Left ventricle myocardium superior (tissue), 1 donor: ENCODE measurements at regions of chr11 and their contacts with region 1.

Region 1: DNA sequence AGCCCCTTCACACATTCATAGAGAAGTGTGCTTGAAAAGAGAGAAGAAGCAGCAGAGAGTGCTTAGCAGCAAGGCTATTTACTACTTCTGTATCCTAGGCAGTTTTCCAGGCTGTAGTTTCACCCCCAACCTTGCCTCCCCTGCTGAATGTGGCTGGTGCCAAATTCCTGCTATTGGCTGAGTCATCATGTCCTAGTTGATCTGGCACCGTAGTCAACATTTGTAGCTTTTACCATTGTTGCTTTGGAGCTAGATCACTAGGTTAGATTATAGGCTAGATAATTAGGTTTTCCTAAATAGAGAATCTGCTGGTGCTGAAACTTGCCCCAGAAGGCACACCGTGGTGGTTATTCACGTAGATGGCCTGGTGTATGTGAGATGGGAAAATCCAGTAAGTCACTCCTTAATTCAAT is 32.7 kb downstream of the ARHGAP42 start:
- DNase-seq: no peak
- ATAC-seq: peak; percentile 95

Region 2: DNA sequence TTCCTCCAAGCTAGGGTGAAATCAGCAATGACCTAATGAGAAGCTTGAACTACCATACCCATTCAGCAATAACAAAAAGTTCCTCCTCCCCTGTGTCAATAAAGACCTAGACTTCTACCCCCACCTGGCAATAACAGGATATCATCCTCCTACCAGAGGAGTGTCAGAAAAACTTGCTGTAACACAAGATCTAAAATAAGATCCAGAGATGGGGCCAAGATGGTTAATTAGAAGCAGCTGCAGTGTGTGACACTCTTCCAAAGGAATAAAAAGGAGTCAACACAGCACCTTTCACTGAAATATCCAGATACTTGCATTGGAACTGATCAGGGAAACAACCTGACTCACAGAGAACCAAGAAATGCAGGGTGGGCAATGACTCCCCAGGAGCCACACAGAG is 117.1 kb before region 1 on chr11:
- intact Hi-C with region 1: no loop called
- DNase-seq: no peak
- ATAC-seq: no peak

Region 3: DNA sequence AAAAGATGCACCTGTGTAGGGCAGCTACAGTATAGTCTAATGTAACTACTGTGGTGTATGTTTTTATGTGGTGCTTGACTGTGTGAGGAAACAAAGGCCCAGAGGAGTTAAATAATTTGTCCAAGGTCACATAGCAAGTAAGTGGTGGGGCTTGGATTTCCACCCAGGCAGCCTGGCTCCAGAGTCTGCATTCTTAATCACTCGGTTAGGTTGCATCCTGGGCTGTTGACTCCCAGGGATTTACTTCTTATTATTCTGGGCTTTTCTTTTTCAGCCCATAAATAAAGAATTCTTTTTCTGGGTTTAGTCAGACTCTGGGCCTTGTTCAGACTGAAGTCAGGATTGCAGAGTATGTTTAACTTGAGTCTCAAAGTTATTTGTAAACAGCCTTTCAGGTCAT is 49.4 kb after region 1 on chr11:
- intact Hi-C with region 1: no loop called
- DNase-seq: no peak
- ATAC-seq: no peak

Region 4: DNA sequence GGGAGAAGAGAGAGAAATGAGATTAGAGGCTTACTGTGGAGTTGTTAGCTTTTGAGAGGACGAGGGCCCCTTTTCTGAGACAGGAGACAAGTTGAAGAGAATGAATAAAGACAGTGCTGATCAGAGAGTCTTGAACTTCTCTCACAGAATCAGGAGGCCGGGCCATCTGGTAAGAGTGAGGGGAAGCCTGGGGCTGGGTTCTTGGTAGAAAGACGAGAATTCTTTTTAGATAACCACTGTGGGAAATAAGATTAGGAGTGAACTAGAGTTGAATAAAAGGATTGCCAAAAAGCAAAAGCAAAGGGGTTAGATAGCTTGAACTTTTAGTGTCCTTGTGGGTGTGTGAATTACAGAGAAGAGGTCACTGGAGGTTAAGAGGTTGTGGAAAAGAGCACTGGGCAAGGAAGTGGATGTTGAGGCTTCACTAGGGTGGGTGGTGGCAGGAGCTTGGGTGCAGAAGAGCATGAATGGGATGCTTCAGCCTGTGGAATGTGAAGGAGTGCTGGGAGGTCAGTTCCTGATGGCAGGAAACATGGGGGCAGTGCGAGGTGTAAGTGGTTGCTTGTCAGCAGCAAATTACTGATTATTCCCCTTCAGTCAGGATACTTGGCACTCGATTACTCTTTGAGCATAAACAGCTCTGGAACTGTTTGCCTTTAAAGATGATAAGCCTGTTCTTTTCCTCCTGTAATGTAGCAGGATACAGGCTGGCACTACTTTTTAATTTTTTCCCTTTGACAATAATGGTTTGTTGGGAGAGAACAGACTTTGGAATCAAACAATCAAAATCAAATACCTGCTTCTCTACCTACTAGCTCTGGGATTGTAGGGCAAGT is 65.6 kb after region 1 on chr11:
- intact Hi-C with region 1: loop called (anchors 2 kb)
- DNase-seq: peak; percentile 44
- ATAC-seq: peak; percentile 94

Region 5: DNA sequence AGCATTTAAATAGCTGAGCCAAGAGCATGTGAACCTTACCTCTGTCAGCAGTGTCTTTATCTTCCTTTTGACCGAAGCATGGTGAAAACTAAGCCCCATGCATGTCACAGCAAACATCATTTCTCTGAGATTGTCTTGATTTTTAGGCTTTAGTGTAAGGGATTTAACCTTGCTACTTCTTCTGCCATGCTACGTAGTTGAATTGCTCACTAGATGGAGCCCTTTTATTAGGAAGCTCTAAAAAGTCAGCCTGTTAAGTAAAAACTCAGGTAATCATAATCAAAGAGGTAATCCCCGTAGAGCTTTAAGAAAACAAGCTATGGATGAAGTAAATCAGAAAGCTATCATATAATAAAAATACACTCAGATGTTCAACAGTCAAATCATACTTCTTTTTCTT is 260.3 kb after region 1 on chr11:
- intact Hi-C with region 1: no loop called
- DNase-seq: no peak
- ATAC-seq: peak; percentile 47